ENCODE measurements at regions of chr20 and their contacts with region 1.

Region 1: GRCh38 chr20:19347943-19348456 is 135.6 kb downstream of the SLC24A3 start:
- DNase-seq: peak in 2 of 9 experiments; percentile 23 to 49
- ATAC-seq: no peak
- H3K4me3 ChIP-seq: peak overlapping the region in 1 of 2 experiments; percentile 27
- H3K4me3 Mint-ChIP-seq: no peak overlapping the region
- H3K27ac ChIP-seq: peak overlapping the region in 1 of 2 experiments; percentile 73
- H3K27ac Mint-ChIP-seq: no peak overlapping the region
- H3K4me1 ChIP-seq: no peaks in the 10 kb centered on the region
- H3K4me1 Mint-ChIP-seq: no peaks in the 10 kb centered on the region
- H3K27me3 ChIP-seq: no peaks in the 10 kb centered on the region
- H3K27me3 Mint-ChIP-seq: no peaks in the 10 kb centered on the region
- CTCF ChIP-seq: no peak

Region 2: DNA sequence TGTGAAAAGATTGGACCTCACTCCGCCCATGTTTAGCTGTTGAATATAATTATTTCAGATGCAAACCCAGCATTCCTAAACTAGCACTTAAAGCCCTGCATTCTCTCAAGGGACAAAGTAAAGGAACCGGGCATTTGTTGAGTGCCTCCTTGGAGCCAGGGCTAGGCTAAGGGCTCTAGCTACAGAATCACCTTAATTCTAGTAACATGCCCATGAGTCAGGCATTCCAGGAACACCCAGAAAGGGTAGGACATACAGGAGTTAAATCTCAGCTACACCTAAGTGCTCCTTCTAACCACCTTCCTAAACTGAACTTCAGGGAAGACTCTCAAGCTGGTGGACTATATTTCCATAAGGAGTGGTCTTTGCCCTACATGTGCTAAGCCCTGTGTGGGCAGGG is 46.2 kb before region 1 on chr20:
- CTCF ChIA-PET with region 1: no interaction called
- POLR2A ChIA-PET with region 1: no interaction called
- intact Hi-C with region 1: no loop called
- DNase-seq: no peak
- ATAC-seq: no peak
- H3K4me3 ChIP-seq: no peak overlapping the region
- H3K4me3 Mint-ChIP-seq: no peak overlapping the region
- H3K27ac ChIP-seq: no peak overlapping the region
- H3K27ac Mint-ChIP-seq: no peak overlapping the region
- H3K4me1 ChIP-seq: no peaks in the 10 kb centered on the region
- H3K4me1 Mint-ChIP-seq: no peaks in the 10 kb centered on the region
- H3K27me3 ChIP-seq: no peaks in the 10 kb centered on the region
- H3K27me3 Mint-ChIP-seq: peaks cover 5% of the 10 kb centered on the region
- CTCF ChIP-seq: no peak

Region 3: DNA sequence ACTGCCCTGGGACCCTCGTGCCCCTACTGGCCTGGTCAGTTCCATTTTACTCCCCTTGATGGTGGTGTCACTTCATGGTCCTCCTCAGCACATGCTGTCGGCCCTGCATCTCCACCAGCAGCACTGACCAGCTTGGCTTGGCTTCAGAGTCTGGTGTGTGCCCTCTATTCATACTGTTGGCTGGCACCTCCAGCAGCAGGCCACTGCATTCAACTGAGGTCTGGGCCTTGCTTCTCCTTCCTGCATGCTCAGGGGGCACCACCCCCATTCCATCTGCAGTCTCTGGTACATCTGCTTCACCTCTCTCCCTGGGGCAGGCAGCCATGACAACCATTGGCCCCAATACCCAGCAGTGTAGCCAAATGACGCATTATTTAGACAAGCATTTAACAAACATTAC is 20.4 kb after region 1 on chr20:
- CTCF ChIA-PET with region 1: no interaction called
- POLR2A ChIA-PET with region 1: no interaction called
- intact Hi-C with region 1: loop called in 1 of 2 experiments (anchors 1 kb)
- DNase-seq: no peak
- ATAC-seq: no peak
- H3K4me3 ChIP-seq: no peak overlapping the region
- H3K4me3 Mint-ChIP-seq: no peak overlapping the region
- H3K27ac ChIP-seq: no peak overlapping the region
- H3K27ac Mint-ChIP-seq: no peak overlapping the region
- H3K4me1 ChIP-seq: no peaks in the 10 kb centered on the region
- H3K4me1 Mint-ChIP-seq: no peaks in the 10 kb centered on the region
- H3K27me3 ChIP-seq: no peaks in the 10 kb centered on the region
- H3K27me3 Mint-ChIP-seq: no peaks in the 10 kb centered on the region
- CTCF ChIP-seq: no peak

Region 4: GRCh38 chr20:19522071-19522801 is 174.2 kb after region 1 on chr20:
- CTCF ChIA-PET with region 1: no interaction called
- POLR2A ChIA-PET with region 1: no interaction called
- intact Hi-C with region 1: no loop called
- DNase-seq: peak in 3 of 9 experiments; percentile 8 to 27 (median 25)
- ATAC-seq: no peak
- H3K4me3 ChIP-seq: no peak overlapping the region
- H3K4me3 Mint-ChIP-seq: no peak overlapping the region
- H3K27ac ChIP-seq: no peak overlapping the region
- H3K27ac Mint-ChIP-seq: peak overlapping the region; percentile 19
- H3K4me1 ChIP-seq: peaks cover 26% of the 10 kb centered on the region
- H3K4me1 Mint-ChIP-seq: peaks cover 22% of the 10 kb centered on the region
- H3K27me3 ChIP-seq: no peaks in the 10 kb centered on the region
- H3K27me3 Mint-ChIP-seq: peaks cover 2% of the 10 kb centered on the region
- CTCF ChIP-seq: no peak

Region 5: GRCh38 chr20:19571996-19572395 is 224.0 kb after region 1 on chr20:
- CTCF ChIA-PET with region 1: no interaction called
- POLR2A ChIA-PET with region 1: no interaction called
- intact Hi-C with region 1: no loop called
- DNase-seq: no peak
- ATAC-seq: no peak
- H3K4me3 ChIP-seq: no peak overlapping the region
- H3K4me3 Mint-ChIP-seq: no peak overlapping the region
- H3K27ac ChIP-seq: no peak overlapping the region
- H3K27ac Mint-ChIP-seq: no peak overlapping the region
- H3K4me1 ChIP-seq: no peaks in the 10 kb centered on the region
- H3K4me1 Mint-ChIP-seq: no peaks in the 10 kb centered on the region
- H3K27me3 ChIP-seq: no peaks in the 10 kb centered on the region
- H3K27me3 Mint-ChIP-seq: peaks cover 2% of the 10 kb centered on the region
- CTCF ChIP-seq: no peak